ENCODE measurements at regions of chr14 and their contacts with region 1.

Region 1: DNA sequence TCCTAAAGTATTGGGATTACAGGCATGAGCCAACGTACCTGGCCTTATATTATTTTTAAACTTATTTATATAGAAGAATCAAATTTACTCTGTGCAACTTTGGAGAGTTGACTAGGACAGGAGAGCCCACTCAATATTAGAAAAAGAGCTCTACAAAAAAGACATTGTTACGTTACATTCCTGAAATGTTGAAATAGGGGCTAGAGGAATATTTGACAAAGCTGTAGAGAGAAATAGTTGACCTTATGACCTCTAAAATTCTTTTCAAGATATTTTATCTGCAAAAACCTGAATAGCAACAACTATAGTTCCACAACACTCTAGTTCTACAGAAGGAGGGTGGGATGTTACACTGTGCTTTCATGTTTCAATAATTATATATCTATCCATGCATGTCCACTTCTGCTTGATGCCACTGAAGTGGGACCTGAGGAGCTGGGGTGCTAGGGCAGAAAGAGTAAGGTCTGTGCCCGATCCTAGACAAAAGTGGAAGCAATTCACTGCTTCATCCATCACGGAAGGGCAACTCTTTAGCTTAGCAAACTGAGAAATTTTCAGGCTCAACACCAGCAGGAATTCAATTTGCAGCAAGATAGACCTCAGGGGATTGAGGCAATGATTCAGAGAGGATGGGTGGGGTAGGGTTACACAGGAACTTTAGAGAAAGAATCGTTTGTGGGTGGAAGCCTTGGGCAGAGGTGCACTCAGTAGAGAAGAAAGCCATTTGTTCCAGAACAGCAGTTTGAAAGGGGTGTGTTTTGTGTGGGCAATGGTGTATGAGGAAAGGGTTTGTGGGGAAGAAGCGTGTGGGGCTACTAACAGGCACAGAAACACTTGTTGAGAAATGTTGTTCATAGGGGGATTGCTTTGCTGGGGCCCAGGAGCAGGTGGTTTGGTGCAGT is 16.0 kb upstream of the RNASE10 start:
- DNase-seq: peak; percentile 72
- ATAC-seq: peak; percentile 36
- H3K4me3 ChIP-seq: peak overlapping the region; percentile 41
- H3K27ac ChIP-seq: peak overlapping the region; percentile 1; the same call in 1 of the 2 replicates
- H3K4me1 ChIP-seq: peaks cover 35% of the 10 kb centered on the region
- H3K27me3 ChIP-seq: no peaks in the 10 kb centered on the region
- CTCF ChIP-seq: no peak
- EP300 ChIP-seq: no peak
- POLR2A ChIP-seq: no peak
- RAD21 ChIP-seq: no peak

Region 2: GRCh38 chr14:20461274-20462001 is 27.9 kb before region 1 on chr14 and contains the start of gene PIP4P1:
- CTCF ChIA-PET with region 1: interaction called, 7 read pairs
- POLR2A ChIA-PET with region 1: interaction called, 6 read pairs
- RAD21 ChIA-PET with region 1: interaction called, 21 read pairs
- SMC1A ChIA-PET with region 1: interaction called, 49 read pairs
- in situ Hi-C with region 1: no loop called
- intact Hi-C with region 1: no loop called
- DNase-seq: peak; percentile 100
- ATAC-seq: peak; percentile 96
- H3K4me3 ChIP-seq: peak within 1 kb of the TSS; percentile 73
- H3K27ac ChIP-seq: peak within 1 kb of the TSS; percentile 87
- H3K4me1 ChIP-seq: peaks cover 6% of the 10 kb centered on the region
- H3K27me3 ChIP-seq: no peaks in the 10 kb centered on the region
- CTCF ChIP-seq: no peak
- EP300 ChIP-seq: no peak
- POLR2A ChIP-seq: peak; percentile 78
- RAD21 ChIP-seq: no peak
- polyA plus RNA-seq, gene PIP4P1: 19.1 to 41.6 TPM

Region 3: DNA sequence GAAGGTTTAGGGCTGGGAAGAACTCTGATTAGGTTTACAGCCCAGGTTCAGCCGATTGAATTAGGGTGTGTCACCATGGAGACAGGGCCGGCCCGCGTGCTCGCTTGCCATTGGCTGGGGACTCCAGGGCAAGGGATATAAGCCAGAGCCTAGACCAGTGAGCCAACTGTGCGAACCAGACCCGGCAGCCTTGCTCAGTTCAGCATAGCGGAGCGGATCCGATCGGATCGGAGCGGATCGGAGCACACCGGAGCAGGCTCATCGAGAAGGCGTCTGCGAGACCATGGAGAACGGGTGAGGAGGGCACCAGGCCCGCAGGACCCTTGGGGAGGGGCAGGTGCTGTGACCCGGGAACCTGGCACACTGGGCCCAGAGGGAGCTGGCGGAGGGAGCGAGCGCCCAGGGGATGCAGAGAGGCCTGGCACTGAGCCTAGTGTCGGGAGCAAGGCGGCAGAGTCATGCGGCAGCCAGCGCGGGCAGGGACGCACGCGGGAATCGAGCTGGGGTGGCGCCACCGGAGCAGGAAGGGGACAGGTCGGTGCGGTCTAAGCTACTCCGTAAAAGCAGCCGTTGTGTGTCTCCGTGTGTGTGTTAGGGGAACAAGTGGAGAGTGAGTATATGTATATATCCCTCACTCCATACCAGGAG is 20.0 kb before region 1 on chr14 and contains the start of gene PNP:
- CTCF ChIA-PET with region 1: interaction called, 6 read pairs
- POLR2A ChIA-PET with region 1: interaction called, 28 read pairs
- RAD21 ChIA-PET with region 1: interaction called, 21 read pairs
- SMC1A ChIA-PET with region 1: interaction called, 49 read pairs
- in situ Hi-C with region 1: no loop called
- intact Hi-C with region 1: no loop called
- DNase-seq: peak; percentile 65
- ATAC-seq: peak; percentile 97
- H3K4me3 ChIP-seq: peak within 1 kb of the TSS; percentile 85
- H3K27ac ChIP-seq: peak within 1 kb of the TSS; percentile 69
- H3K4me1 ChIP-seq: peaks cover 7% of the 10 kb centered on the region; the same call in 1 of the 2 replicates
- H3K27me3 ChIP-seq: no peaks in the 10 kb centered on the region
- CTCF ChIP-seq: 0 out of 6 replicates have a peak, but pooled peaks of 1 of the 3 experiments have one; percentile 7
- EP300 ChIP-seq: no peak
- POLR2A ChIP-seq: peak; percentile 100
- RAD21 ChIP-seq: no peak
- polyA plus RNA-seq, gene PNP: 103 to 123 TPM

Region 4: DNA sequence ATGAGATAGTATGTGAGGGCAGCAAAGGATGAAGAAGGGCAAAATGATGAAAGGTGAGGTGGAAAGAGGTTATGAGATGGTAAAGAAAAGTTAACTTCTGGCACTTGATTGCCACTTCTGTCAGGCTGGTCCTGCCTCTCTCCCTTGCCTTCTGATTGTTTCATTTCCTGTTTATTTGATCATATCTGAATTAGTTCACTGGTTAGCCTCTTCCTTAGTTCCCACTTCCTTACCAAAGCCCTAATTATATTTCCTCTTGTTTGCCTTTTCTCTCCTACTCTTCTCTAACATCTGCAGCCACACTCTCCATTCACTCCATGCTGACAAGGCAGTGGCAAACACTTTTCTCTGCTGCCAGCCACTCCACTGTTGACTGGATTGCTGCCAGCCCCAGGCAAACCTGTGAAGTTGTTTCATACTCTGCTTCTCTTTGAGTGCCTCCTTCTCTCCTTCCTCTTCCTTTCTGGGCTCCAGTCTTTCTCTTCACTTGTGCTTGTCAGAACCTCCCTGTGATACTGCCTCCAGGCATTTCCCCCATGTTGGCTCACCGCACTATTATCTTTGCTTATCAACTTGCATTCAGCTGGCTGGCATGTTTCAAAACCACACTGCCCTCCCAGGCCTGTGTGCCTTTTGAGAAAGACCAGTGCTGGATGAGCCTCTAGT is 12.0 kb before region 1 on chr14:
- CTCF ChIA-PET with region 1: interaction called, 6 read pairs
- POLR2A ChIA-PET with region 1: interaction called, 3 read pairs
- RAD21 ChIA-PET with region 1: interaction called, 3 read pairs
- SMC1A ChIA-PET with region 1: interaction called, 36 read pairs
- in situ Hi-C with region 1: no loop called
- intact Hi-C with region 1: no loop called
- DNase-seq: no peak
- ATAC-seq: no peak; the same call in 1 of the 3 replicates
- H3K4me3 ChIP-seq: no peak overlapping the region
- H3K27ac ChIP-seq: no peak overlapping the region
- H3K4me1 ChIP-seq: no peaks in the 10 kb centered on the region
- H3K27me3 ChIP-seq: no peaks in the 10 kb centered on the region
- CTCF ChIP-seq: no peak
- EP300 ChIP-seq: no peak
- POLR2A ChIP-seq: no peak
- RAD21 ChIP-seq: no peak

Region 5: GRCh38 chr14:20530771-20531571 is 41.6 kb after region 1 on chr14:
- CTCF ChIA-PET with region 1: interaction called, 11 read pairs
- POLR2A ChIA-PET with region 1: no interaction called
- RAD21 ChIA-PET with region 1: interaction called, 4 read pairs
- SMC1A ChIA-PET with region 1: interaction called, 11 read pairs
- in situ Hi-C with region 1: no loop called
- intact Hi-C with region 1: loop called (anchors 5 kb)
- DNase-seq: peak; percentile 21
- ATAC-seq: peak; percentile 98
- H3K4me3 ChIP-seq: no peak overlapping the region
- H3K27ac ChIP-seq: no peak overlapping the region
- H3K4me1 ChIP-seq: no peaks in the 10 kb centered on the region
- H3K27me3 ChIP-seq: no peaks in the 10 kb centered on the region
- CTCF ChIP-seq: peak; percentile 65 to 75 (median 73)
- EP300 ChIP-seq: no peak
- POLR2A ChIP-seq: no peak
- RAD21 ChIP-seq: peak; percentile 66

Region 6: GRCh38 chr14:20606190-20606901 is 117.0 kb after region 1 on chr14:
- CTCF ChIA-PET with region 1: interaction called, 42 read pairs
- POLR2A ChIA-PET with region 1: no interaction called
- RAD21 ChIA-PET with region 1: interaction called, 13 read pairs
- SMC1A ChIA-PET with region 1: interaction called, 27 read pairs
- in situ Hi-C with region 1: no loop called
- intact Hi-C with region 1: loop called (anchors 2 kb)
- DNase-seq: no peak
- ATAC-seq: no peak
- H3K4me3 ChIP-seq: no peak overlapping the region
- H3K27ac ChIP-seq: no peak overlapping the region
- H3K4me1 ChIP-seq: peaks cover 15% of the 10 kb centered on the region
- H3K27me3 ChIP-seq: no peaks in the 10 kb centered on the region
- CTCF ChIP-seq: peak; percentile 46 to 58 (median 47); a peak in 4 of 6 replicates
- EP300 ChIP-seq: no peak
- POLR2A ChIP-seq: no peak
- RAD21 ChIP-seq: peak; percentile 65

Measured in GM12878 (cell line).